T-cell (primary cell): ENCODE measurements at regions of chr5 and their contacts with region 1.

Region 1: GRCh38 chr5:157689942-157690689 is 18.8 kb downstream of the C5orf52 start:
- DNase-seq: peak in 20 of 35 experiments; percentile 3 to 53 (median 21)
- ATAC-seq: peak in 3 of 4 experiments; percentile 24 to 58 (median 36)
- H3K4me3 ChIP-seq: peak overlapping the region in 1 of 2 donors; percentile 28
- H3K4me3 Mint-ChIP-seq: no peak overlapping the region
- H3K27ac ChIP-seq: no peak overlapping the region
- H3K27ac Mint-ChIP-seq: no peak overlapping the region
- H3K4me1 ChIP-seq: peaks cover 0 to 4% of the 10 kb centered on the region in 2 experiments
- H3K4me1 Mint-ChIP-seq: no peaks in the 10 kb centered on the region
- H3K27me3 ChIP-seq: peaks cover 0 to 3% of the 10 kb centered on the region in 2 experiments
- H3K27me3 Mint-ChIP-seq: peaks cover under 1 to 4% of the 10 kb centered on the region in 2 donors

Region 2: GRCh38 chr5:157670662-157671591 is 19.2 kb before region 1 on chr5 and contains the start of gene C5orf52:
- CTCF ChIA-PET with region 1: no interaction called
- POLR2A ChIA-PET with region 1: no interaction called
- DNase-seq: peak in 5 of 35 experiments; percentile 4 to 16 (median 9)
- ATAC-seq: peak; percentile 28 to 45 (median 34)
- H3K4me3 ChIP-seq: peak within 1 kb of the TSS; percentile 65 to 71
- H3K4me3 Mint-ChIP-seq: peak within 1 kb of the TSS; percentile 85 to 87 (median 86)
- H3K27ac ChIP-seq: no peak within 1 kb of the TSS
- H3K27ac Mint-ChIP-seq: peak within 1 kb of the TSS in 1 of 2 donors; percentile 70
- H3K4me1 ChIP-seq: peaks cover 2 to 13% of the 10 kb centered on the region in 2 experiments
- H3K4me1 Mint-ChIP-seq: peaks cover 20 to 27% (median 24%) of the 10 kb centered on the region in 3 donors
- H3K27me3 ChIP-seq: peaks cover 0 to 32% of the 10 kb centered on the region in 2 experiments
- H3K27me3 Mint-ChIP-seq: peaks cover 27 to 35% of the 10 kb centered on the region in 2 donors
- total RNA-seq, gene C5orf52: not detected

Region 3: GRCh38 chr5:157877821-157878220 is 187.7 kb after region 1 on chr5:
- CTCF ChIA-PET with region 1: no interaction called
- POLR2A ChIA-PET with region 1: no interaction called
- DNase-seq: no peak
- ATAC-seq: no peak
- H3K4me3 ChIP-seq: no peak overlapping the region
- H3K4me3 Mint-ChIP-seq: no peak overlapping the region
- H3K27ac ChIP-seq: no peak overlapping the region
- H3K27ac Mint-ChIP-seq: no peak overlapping the region
- H3K4me1 ChIP-seq: no peaks in the 10 kb centered on the region
- H3K4me1 Mint-ChIP-seq: no peaks in the 10 kb centered on the region
- H3K27me3 ChIP-seq: peaks cover 0 to 4% of the 10 kb centered on the region in 2 experiments
- H3K27me3 Mint-ChIP-seq: no peaks in the 10 kb centered on the region

Region 4: GRCh38 chr5:159002171-159002570 is 1312.1 kb after region 1 on chr5:
- CTCF ChIA-PET with region 1: no interaction called
- POLR2A ChIA-PET with region 1: interaction called in 1 of 2 experiments, 11 read pairs
- DNase-seq: no peak
- ATAC-seq: no peak
- H3K4me3 ChIP-seq: no peak overlapping the region
- H3K4me3 Mint-ChIP-seq: no peak overlapping the region
- H3K27ac ChIP-seq: no peak overlapping the region
- H3K27ac Mint-ChIP-seq: no peak overlapping the region
- H3K4me1 ChIP-seq: peaks cover 7 to 16% of the 10 kb centered on the region in 2 experiments
- H3K4me1 Mint-ChIP-seq: peaks cover 16 to 22% (median 18%) of the 10 kb centered on the region in 3 donors
- H3K27me3 ChIP-seq: peaks cover 0 to 6% of the 10 kb centered on the region in 2 experiments
- H3K27me3 Mint-ChIP-seq: peaks cover 0 to 8% of the 10 kb centered on the region in 2 donors